ENCODE measurements at regions of chr17 and their contacts with region 1.

Region 1: DNA sequence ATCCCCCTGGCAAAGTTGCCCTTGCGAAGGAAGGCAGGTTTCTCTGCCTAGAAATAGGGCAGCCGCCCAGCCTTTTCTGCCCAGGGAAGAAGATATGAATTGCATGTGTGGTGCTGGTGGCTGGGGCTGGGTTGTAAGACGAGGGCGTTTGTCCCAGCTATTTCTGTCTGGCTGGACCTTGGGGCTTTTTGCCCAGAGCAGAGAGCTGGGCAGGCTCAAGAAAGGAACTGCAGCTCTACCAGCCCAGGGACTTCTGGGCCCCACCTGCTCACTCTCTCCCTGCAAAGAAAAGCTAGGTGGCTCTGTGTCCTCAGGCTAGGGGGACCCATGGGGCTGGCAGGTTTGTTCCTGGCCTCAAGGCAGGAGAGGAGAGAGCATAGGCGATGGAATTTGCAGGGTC is 586 bp downstream of the CACNG1 start:
- DNase-seq: no peak
- H3K4me3 ChIP-seq: no peak overlapping the region
- H3K4me3 Mint-ChIP-seq: no peak overlapping the region
- H3K27ac Mint-ChIP-seq: no peak overlapping the region
- H3K4me1 ChIP-seq: peaks cover 20% of the 10 kb centered on the region
- H3K4me1 Mint-ChIP-seq: peaks cover 7% of the 10 kb centered on the region
- H3K27me3 ChIP-seq: no peaks in the 10 kb centered on the region
- H3K27me3 Mint-ChIP-seq: no peaks in the 10 kb centered on the region
- CTCF ChIP-seq: no peak

Region 2: DNA sequence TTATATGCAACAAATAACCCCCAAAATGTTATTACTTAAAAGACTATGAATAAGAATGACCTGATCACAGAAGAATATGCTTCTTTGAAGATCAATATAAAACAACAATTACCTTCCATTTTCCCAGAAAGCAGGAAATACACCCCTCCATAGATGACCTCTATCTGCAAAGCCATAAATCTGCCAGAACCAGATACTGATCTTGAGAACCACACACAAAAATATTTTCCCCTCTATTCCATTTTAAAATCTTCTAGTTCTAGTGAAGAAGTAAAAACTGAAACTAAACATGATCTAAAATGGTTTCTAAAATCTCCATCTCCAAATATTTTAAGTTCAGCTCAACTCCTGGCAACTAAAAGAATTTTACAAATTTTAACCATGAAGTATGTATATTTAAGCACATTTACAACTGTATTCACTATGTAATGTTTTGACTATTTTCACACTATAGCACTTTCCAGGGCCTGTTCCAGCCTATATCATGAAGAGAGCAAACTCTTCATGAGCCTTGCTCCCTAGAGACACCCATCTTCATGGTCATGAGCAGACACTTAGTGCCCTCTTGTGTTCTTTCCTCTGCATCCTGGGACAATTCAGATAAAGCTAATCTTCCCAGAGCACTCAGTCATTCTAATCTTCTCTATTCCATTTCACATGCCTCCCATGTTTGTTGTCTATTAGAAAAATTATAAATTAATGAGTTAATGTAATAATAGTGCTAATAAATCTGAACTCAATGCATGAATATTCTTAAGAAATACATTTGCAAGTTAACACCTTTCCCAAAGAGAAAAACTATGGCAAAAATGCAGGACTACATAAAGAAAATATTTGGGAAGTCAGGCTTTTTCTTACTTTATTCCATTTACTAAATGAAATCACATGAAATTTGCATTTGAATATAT is 113.0 kb after region 1 on chr17:
- CTCF ChIA-PET with region 1: interaction called, 3 read pairs
- POLR2A ChIA-PET with region 1: no interaction called
- intact Hi-C with region 1: loop called (anchors 1 kb)
- DNase-seq: peak in 1 of 2 experiments; percentile 36
- H3K4me3 ChIP-seq: no peak overlapping the region
- H3K4me3 Mint-ChIP-seq: no peak overlapping the region
- H3K27ac Mint-ChIP-seq: no peak overlapping the region
- H3K4me1 ChIP-seq: 0 out of 2 replicates have a peak, but pooled peaks cover 4% of the 10 kb centered on the region
- H3K4me1 Mint-ChIP-seq: no peaks in the 10 kb centered on the region
- H3K27me3 ChIP-seq: no peaks in the 10 kb centered on the region
- H3K27me3 Mint-ChIP-seq: no peaks in the 10 kb centered on the region
- CTCF ChIP-seq: peak in 1 of 2 experiments; percentile 39

Measured in Caco-2 (cell line).